Endothelial cell of umbilical vein (primary cell): ENCODE measurements at regions of chr9 and their contacts with region 1.

Region 1: DNA sequence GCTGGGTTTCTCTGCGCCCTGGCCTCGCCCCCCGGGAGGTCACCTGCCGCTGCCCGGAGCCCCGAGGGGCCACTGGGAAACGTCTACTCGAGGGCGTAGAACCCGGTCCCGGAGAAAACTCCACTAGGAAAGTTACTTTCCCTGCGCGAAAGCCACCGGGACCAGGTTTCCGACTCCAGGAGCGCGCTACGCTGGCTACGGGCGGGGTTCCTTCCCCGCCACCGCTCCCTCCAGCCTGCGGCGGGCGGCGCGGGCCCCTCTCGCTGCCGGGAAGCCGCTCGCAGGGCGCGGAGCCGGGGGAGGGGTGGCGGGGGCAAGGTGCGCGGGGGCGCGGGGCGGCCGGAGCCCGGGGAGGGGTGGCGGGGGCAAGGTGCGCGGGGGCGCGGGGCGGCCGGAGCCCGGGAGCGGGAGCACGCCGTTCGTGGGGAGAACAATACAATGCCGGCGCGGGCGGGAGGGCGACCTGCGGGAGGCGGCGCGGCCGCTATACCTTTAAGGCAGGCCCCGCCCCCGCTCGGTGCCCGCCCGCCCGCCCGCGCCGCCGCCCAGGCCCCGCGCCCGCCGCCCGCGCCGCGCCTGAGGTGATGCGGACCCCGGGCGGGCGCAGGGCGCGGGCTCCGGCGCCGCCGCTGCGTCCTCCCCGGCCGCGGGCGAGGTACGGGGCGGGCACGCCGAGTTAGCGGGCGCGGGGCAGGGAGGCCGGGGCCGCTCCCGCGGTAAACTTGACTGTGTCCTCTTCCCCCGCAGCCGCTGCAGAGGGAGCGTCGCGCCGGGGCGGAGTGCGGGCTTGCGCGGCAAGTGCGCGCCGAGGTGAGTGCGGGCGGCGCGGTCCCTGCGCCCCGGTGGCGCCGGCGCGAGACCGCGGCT is 278.1 kb downstream of the AOPEP start:
- DNase-seq: peak; percentile 19
- H3K4me3 ChIP-seq: peak overlapping the region; percentile 88 to 97 (median 95)
- H3K27ac ChIP-seq: peak overlapping the region; percentile 93
- H3K4me1 ChIP-seq: peaks cover 47% of the 10 kb centered on the region
- H3K27me3 ChIP-seq: no peaks in the 10 kb centered on the region
- CTCF ChIP-seq: no peak
- POLR2A ChIP-seq: peak; percentile 22

Region 2: DNA sequence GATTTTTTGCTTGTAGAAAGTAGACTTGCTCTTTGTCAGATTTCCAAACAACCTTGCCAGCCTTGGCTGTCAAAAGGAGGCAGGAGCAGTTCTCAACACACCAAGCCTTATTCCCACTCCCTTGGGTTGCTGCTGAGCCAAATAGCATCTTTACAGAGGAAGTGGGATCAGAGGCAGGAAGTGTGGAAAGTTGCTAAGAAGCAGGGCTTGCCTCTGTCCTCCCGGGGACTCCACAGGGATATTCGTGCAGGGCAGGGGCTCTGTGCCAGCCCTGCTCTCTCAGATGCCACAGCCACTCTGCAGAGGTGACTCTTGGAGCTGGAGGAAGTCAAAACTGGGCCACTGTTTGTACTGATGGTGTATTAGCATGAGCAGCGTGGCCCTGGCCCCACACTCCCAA is 896.1 kb before region 1 on chr9:
- CTCF ChIA-PET with region 1: no interaction called
- POLR2A ChIA-PET with region 1: no interaction called
- dilution Hi-C with region 1: no loop called
- intact Hi-C with region 1: no loop called
- DNase-seq: no peak
- H3K4me3 ChIP-seq: no peak overlapping the region
- H3K27ac ChIP-seq: no peak overlapping the region
- H3K4me1 ChIP-seq: peaks cover 2% of the 10 kb centered on the region
- H3K27me3 ChIP-seq: no peaks in the 10 kb centered on the region
- CTCF ChIP-seq: no peak
- POLR2A ChIP-seq: no peak

Region 3: DNA sequence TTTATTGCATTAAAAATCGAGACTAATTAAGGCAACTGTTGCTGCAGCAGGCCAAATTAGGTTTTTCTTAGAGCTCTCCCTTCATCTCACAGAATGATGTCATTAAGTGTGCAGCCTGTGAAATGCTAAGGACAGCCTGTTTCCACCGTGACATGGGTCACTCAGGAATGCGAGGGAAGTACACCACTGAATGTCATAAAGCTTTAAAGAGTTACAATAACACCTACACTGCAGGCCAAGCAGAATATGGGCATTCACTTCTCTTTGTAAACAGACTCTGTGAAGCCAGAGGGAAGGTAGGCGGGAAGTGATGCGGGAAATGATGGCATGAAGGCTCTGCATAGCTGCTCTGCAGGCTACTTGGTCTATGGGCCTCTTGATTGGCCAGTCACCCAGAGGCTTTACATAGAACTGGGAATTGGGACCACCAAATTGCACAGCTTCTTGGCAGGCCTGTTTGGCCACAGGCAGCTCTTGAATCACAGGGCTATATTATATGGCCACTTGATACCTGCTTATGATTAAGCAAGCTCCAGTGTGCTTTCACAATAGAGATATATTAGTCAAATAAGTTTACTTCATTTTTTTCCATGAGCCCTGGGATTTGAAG is 306.6 kb before region 1 on chr9:
- CTCF ChIA-PET with region 1: no interaction called
- POLR2A ChIA-PET with region 1: no interaction called
- dilution Hi-C with region 1: no loop called
- intact Hi-C with region 1: no loop called
- DNase-seq: no peak
- H3K4me3 ChIP-seq: no peak overlapping the region
- H3K27ac ChIP-seq: no peak overlapping the region
- H3K4me1 ChIP-seq: no peaks in the 10 kb centered on the region
- H3K27me3 ChIP-seq: peaks cover 3 to 13% of the 10 kb centered on the region in 2 experiments
- CTCF ChIP-seq: no peak
- POLR2A ChIP-seq: no peak

Region 4: GRCh38 chr9:94734054-94734754 is 270.4 kb before region 1 on chr9:
- CTCF ChIA-PET with region 1: no interaction called
- POLR2A ChIA-PET with region 1: no interaction called
- dilution Hi-C with region 1: no loop called
- intact Hi-C with region 1: loop called (anchors 5 kb)
- DNase-seq: peak; percentile 59
- H3K4me3 ChIP-seq: peak overlapping the region in 1 of 3 experiments; percentile 30
- H3K27ac ChIP-seq: no peak overlapping the region
- H3K4me1 ChIP-seq: peaks cover 15% of the 10 kb centered on the region
- H3K27me3 ChIP-seq: no peaks in the 10 kb centered on the region
- CTCF ChIP-seq: no peak
- POLR2A ChIP-seq: no peak

Region 5: GRCh38 chr9:94867281-94867841 is 137.3 kb before region 1 on chr9:
- CTCF ChIA-PET with region 1: interaction called, 3 read pairs
- POLR2A ChIA-PET with region 1: no interaction called
- dilution Hi-C with region 1: no loop called
- intact Hi-C with region 1: loop called (anchors 1 kb)
- DNase-seq: peak; percentile 93
- H3K4me3 ChIP-seq: peak overlapping the region in 1 of 3 experiments; percentile 16
- H3K27ac ChIP-seq: peak overlapping the region; percentile 90
- H3K4me1 ChIP-seq: peaks cover 47% of the 10 kb centered on the region
- H3K27me3 ChIP-seq: no peaks in the 10 kb centered on the region
- CTCF ChIP-seq: no peak
- POLR2A ChIP-seq: no peak

Region 6: GRCh38 chr9:94928691-94929372 is 75.8 kb before region 1 on chr9:
- CTCF ChIA-PET with region 1: interaction called, 3 read pairs
- POLR2A ChIA-PET with region 1: no interaction called
- dilution Hi-C with region 1: no loop called
- intact Hi-C with region 1: loop called (anchors 1 kb)
- DNase-seq: peak; percentile 35
- H3K4me3 ChIP-seq: no peak overlapping the region
- H3K27ac ChIP-seq: peak overlapping the region; percentile 97
- H3K4me1 ChIP-seq: peaks cover 19% of the 10 kb centered on the region
- H3K27me3 ChIP-seq: no peaks in the 10 kb centered on the region
- CTCF ChIP-seq: no peak
- POLR2A ChIP-seq: no peak

Region 7: GRCh38 chr9:95025213-95026147 is 20.8 kb after region 1 on chr9:
- CTCF ChIA-PET with region 1: interaction called, 9 read pairs
- POLR2A ChIA-PET with region 1: no interaction called
- dilution Hi-C with region 1: no loop called
- intact Hi-C with region 1: loop called (anchors 1 kb)
- DNase-seq: peak; percentile 89
- H3K4me3 ChIP-seq: peak overlapping the region in 1 of 3 experiments; percentile 20
- H3K27ac ChIP-seq: peak overlapping the region; percentile 7
- H3K4me1 ChIP-seq: peaks cover 38% of the 10 kb centered on the region
- H3K27me3 ChIP-seq: no peaks in the 10 kb centered on the region
- CTCF ChIP-seq: peak in 1 of 2 donors; percentile 33
- POLR2A ChIP-seq: no peak

Region 8: DNA sequence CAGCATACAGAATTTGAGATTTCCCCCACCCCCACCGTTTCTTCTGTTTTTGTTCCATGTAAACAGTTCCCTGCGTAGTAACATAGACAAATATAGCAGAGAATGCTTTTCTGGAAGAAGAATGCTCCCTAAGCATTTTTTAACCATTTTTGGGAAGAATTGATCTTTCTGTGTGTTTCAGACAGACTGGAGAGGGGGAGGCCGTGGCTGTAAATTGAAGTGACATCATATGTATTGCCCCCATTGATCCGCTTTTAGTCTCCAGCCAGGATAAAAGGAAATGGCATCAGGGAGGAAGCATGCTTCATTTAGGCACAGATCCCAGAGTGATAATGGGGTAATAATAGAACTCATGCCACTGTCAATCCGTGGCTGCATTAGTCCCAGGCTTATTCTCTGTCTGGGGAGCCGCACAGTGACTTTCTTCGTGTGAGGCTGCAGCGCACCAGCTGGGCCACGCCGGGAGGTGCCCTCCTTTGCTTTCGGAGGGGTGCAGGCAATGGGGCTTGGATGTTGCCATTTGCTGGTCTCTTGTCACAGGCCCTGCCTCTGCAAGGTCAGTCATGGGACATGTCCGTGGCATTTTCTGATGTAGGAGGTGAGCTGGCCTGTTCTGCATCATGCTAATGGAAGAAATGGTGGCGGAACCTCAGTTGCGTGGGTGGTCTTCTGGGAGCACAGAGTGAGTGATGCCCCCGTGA is 51.4 kb after region 1 on chr9:
- CTCF ChIA-PET with region 1: no interaction called
- POLR2A ChIA-PET with region 1: no interaction called
- dilution Hi-C with region 1: no loop called
- intact Hi-C with region 1: loop called (anchors 2 kb)
- DNase-seq: peak; percentile 74
- H3K4me3 ChIP-seq: no peak overlapping the region
- H3K27ac ChIP-seq: peak overlapping the region; percentile 72
- H3K4me1 ChIP-seq: peaks cover 18% of the 10 kb centered on the region
- H3K27me3 ChIP-seq: no peaks in the 10 kb centered on the region
- CTCF ChIP-seq: no peak
- POLR2A ChIP-seq: no peak

Region 9: DNA sequence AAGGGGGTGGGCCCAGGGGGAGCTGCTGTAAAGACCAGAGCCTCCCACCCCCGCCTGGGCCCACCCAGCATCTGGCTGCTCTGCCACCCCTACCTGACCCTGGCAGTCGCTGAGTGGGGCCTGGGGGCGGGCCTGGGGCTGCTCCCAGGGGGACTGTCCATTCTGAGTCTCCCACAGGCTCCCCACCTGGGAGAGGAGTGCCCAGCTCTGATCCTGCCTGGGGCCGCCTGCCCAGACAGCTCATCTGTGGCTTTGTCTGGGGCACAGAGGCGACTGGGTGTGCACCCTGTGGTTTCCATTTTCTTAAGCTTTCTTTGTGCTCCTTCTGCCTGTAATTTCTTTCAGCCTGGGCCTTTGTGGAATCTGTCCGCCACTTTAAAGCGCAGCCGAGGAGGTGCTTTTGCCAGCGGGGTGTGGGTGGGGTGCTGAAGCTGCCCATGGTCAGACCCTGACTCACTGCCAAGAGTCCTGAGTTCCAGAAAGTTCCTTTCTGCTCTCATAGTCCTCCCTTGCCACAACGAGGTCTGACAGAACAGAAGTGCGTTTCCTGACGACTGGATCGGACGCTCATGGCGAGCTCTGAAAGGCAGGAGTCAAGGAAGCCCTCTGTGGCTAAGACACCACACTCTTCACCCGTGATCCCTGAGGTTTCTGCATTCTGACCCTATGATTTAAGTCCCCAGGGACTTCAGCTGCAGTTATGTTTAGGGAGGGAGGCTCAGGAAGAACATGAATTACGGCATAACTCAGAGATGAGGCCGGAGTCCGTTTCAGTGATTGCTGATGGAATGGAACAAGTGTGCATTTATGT is 87.8 kb after region 1 on chr9:
- CTCF ChIA-PET with region 1: no interaction called
- POLR2A ChIA-PET with region 1: no interaction called
- dilution Hi-C with region 1: no loop called
- intact Hi-C with region 1: no loop called
- DNase-seq: peak; percentile 20
- H3K4me3 ChIP-seq: no peak overlapping the region
- H3K27ac ChIP-seq: no peak overlapping the region
- H3K4me1 ChIP-seq: peaks cover 6% of the 10 kb centered on the region
- H3K27me3 ChIP-seq: no peaks in the 10 kb centered on the region
- CTCF ChIP-seq: no peak
- POLR2A ChIP-seq: peak; percentile 31